Posterior cingulate gyrus (tissue), 11 donors: ENCODE measurements at regions of chr16 and their contacts with region 1.

Region 1: GRCh38 chr16:67468731-67469130 is 12.2 kb downstream of the ATP6V0D1 start:
- DNase-seq: no peak

Region 2: GRCh38 chr16:67430977-67431789 is 37.5 kb before region 1 on chr16 and contains the start of gene HSD11B2:
- intact Hi-C with region 1: loop called (anchors 5 kb)
- DNase-seq: peak in 8 of 10 donors; percentile 24 to 93 (median 44)